ENCODE measurements at regions of chr17 and their contacts with region 1.

Region 1: DNA sequence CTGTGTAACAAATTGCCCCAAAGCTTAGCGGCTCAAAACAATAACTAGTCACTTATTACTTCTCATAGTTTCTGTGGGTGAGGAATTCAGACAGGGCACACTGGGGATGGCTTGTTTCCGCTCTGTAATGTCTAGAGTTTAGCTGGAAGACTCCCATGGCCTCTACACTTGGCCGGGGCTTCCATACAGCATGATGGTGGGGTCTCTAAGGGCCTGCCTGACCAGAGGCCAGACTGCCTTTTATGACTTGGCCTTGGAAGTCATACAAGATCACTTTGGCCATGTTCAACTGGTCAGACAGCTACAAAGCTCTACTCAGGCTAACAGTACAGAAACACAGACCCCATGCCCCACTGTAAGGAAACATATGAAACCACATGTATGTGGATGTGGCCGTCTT is 8.2 kb downstream of the GLP2R start:
- DNase-seq: no peak

Region 2: DNA sequence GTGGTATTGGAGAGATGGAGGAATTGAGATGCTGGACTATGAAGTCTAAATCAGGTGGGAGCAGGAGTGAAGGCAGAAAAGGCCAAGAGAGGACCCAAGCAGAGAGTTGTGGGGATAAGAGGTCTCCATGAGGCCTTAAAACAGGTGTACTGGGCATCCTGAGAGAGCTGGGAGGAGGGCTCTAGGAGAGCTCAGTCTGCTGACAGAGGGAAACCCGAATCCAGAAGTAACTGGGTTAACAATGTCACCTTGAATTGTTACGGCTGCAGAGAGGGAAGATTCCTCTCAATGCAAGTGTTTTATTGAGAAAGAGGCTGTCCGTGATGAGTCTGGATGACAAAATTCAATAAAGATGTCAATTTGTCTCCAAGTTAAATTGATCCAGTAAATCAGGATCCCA is 50.9 kb before region 1 on chr17:
- intact Hi-C with region 1: loop called (anchors 5 kb)
- DNase-seq: no peak